ENCODE measurements at regions of chr5 and their contacts with region 1.

Region 1: GRCh38 chr5:5492087-5492933 is 69.8 kb downstream of the ICE1 start:
- DNase-seq: peak; percentile 85
- H3K4me3 Mint-ChIP-seq: peak overlapping the region; percentile 74
- H3K27ac Mint-ChIP-seq: peak overlapping the region; percentile 8
- H3K4me1 Mint-ChIP-seq: peaks cover 17% of the 10 kb centered on the region
- H3K27me3 Mint-ChIP-seq: peaks cover 10% of the 10 kb centered on the region

Region 2: DNA sequence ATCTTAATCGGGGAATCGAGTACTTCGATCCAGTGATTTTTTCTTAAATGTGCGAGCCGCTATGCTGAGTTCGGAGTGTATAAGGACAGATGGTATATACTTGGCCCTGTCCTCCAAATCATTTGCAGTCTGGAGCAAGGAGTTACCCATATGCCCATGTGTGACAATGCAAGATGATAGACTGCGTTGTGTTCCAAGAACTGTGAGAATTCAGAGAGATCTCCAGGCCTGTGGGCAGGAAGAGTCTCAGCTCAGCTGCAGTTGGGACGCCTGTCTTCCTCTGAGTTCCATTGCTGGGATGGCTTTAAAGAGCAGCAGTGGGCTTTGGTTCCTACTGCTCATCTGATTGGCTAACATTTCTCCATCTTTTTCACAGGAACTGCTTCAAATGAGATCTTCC is 245.6 kb before region 1 on chr5:
- intact Hi-C with region 1: no loop called
- DNase-seq: no peak
- H3K4me3 Mint-ChIP-seq: no peak overlapping the region
- H3K27ac Mint-ChIP-seq: no peak overlapping the region
- H3K4me1 Mint-ChIP-seq: no peaks in the 10 kb centered on the region
- H3K27me3 Mint-ChIP-seq: no peaks in the 10 kb centered on the region

Region 3: GRCh38 chr5:5649641-5650040 is 157.3 kb after region 1 on chr5:
- intact Hi-C with region 1: loop called (anchors 10 kb)
- DNase-seq: no peak
- H3K4me3 Mint-ChIP-seq: no peak overlapping the region
- H3K27ac Mint-ChIP-seq: no peak overlapping the region
- H3K4me1 Mint-ChIP-seq: no peaks in the 10 kb centered on the region
- H3K27me3 Mint-ChIP-seq: no peaks in the 10 kb centered on the region

Region 4: DNA sequence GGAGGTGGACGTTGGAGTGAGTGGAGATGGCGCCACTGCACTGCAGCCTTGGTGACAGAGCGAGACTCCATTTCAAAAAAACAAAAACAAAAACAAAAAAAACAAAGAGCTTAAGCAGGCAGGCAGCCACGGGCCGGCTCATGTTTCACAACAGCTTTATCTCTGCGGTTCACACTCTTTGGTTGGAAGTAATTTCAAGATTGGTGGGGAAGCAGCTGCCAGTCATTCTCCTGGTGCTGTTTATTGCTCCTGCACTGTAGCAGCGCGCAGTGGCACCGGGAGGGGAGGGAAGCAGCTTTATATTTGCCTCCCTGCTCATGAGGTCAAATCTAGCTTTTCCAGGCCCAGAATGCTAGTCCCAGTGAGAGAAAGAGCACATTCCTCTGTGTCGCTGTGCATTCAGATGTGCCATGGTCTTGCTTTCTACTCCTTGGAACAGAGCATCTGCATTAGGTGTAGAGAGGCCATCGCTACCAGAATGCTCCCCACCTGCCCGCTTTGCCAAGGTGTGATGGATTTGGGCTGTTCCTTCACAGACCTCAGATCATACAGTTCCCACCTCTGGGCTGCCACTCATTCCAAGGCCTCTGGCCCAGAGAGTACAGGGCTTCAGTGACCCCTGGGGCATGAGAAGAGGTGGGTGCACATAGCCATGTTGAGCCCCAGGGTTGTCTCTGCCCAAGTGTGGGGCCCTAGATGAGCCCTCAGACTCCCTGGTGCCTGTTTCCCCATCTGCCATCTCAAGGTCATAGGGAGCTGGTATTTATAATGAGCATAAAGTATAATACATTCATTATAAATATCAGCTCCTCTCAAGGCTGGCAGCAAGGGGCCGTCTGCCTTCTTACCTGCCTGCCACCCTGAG is 615.6 kb after region 1 on chr5:
- intact Hi-C with region 1: no loop called
- DNase-seq: no peak
- H3K4me3 Mint-ChIP-seq: no peak overlapping the region
- H3K27ac Mint-ChIP-seq: no peak overlapping the region
- H3K4me1 Mint-ChIP-seq: no peaks in the 10 kb centered on the region
- H3K27me3 Mint-ChIP-seq: no peaks in the 10 kb centered on the region

Region 5: GRCh38 chr5:6377905-6378765 is 885.8 kb after region 1 on chr5 and contains the start of gene MED10:
- intact Hi-C with region 1: loop called (anchors 5 kb)
- DNase-seq: peak; percentile 98
- H3K4me3 Mint-ChIP-seq: peak within 1 kb of the TSS; percentile 100
- H3K27ac Mint-ChIP-seq: peak within 1 kb of the TSS; percentile 98
- H3K4me1 Mint-ChIP-seq: peaks cover 46% of the 10 kb centered on the region
- H3K27me3 Mint-ChIP-seq: peaks cover 5% of the 10 kb centered on the region
- total RNA-seq, gene MED10: 58.0 and 63.8 TPM in 2 replicates

Region 6: DNA sequence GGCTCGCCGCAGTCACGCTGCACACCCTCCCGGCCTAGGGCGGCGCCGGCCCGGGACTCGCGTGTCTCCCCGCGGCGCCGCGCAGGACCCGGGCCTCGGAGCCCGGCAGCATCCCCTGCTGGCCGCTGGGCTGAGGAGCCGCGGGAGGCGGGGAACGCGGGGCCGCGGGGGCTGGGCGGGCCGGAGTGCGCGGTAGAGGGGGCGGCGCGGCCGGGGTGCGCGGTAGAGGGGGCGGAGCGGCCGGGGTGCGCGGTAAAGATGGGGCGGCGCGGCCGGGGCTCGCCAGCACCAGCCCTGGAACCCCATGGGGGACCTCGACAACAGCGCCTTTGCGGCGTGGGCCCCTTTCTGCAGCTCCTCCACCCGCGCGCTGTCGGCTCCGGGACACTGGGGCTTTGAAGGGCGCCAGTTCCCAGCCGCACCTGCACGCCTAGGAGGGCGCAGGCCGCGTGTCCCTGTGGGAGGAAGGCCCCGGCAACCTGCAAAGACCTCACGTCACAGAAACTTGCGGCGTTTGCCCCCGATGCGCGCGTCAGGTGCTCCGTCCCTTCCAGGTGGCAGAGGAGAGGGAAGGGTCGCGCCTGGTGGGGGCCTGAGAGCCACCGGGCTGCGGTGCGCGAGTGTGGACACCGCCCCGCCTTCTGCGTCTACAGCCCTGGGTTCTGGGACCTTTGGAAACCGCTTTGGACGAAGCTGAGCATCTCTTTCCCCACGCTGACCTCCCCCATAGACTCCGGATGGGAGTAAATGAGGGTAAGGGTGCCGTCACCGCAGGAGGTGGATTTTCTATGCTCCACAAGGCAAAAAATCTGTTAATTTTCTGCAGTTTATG is 1091.0 kb after region 1 on chr5:
- intact Hi-C with region 1: loop called (anchors 2 kb)
- DNase-seq: peak; percentile 80
- H3K4me3 Mint-ChIP-seq: no peak overlapping the region
- H3K27ac Mint-ChIP-seq: no peak overlapping the region
- H3K4me1 Mint-ChIP-seq: peaks cover 3% of the 10 kb centered on the region
- H3K27me3 Mint-ChIP-seq: peaks cover 53% of the 10 kb centered on the region

Region 7: GRCh38 chr5:6745706-6746222 is 1253.5 kb after region 1 on chr5:
- intact Hi-C with region 1: loop called (anchors 10 kb)
- DNase-seq: peak; percentile 79
- H3K4me3 Mint-ChIP-seq: no peak overlapping the region
- H3K27ac Mint-ChIP-seq: no peak overlapping the region
- H3K4me1 Mint-ChIP-seq: peaks cover 11% of the 10 kb centered on the region
- H3K27me3 Mint-ChIP-seq: no peaks in the 10 kb centered on the region

Measured in activated CD4-positive, alpha-beta T cell treated with anti-CD3 and anti-CD28 coated beads, Interleukin-2, amount 10 ng/mL, durations not matched to agents 24 days and 14 days (primary cell).